ENCODE measurements at regions of chr5 and their contacts with region 1.

Region 1: DNA sequence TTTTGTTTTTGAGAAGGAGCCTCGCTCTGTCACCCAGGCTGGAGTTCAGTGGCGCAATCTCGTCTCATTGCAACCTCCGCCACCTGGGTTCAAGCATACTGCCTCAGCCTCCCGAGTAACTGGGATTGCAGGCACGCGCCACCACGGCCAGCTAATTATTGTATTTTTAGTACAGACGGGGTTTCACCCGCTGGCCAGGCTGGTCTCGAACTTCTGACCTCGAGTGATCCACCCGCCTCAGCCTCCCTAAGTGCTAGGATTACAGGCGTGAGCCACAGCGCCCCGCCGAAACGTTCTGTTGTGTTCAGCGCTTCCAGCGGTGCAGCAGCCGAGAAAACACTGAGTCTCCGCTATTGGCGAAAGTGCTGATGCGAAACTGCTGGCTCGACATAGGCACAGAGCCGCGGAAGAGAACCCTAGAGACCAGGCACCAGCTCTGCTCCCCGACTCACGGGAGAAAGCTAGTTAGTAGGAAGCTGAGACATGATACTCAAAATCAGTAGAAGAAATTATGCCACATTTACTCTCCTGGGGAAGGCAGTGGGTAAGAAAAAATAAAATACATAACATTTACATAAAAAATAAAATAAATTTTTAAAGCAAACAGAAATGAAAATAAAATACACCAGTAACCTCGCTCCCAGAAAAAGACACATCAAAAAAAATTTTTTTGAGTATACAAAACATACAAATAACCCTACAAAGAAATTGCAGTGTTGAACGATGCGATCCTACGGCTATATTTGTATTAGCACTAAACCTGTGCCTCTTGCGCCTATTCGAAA is 31.6 kb downstream of the ANXA2R start:
- DNase-seq: peak; percentile 84 to 95 (median 89)
- H3K4me3 ChIP-seq: peak overlapping the region; percentile 79
- H3K4me3 Mint-ChIP-seq: peak overlapping the region; percentile 85 to 98 (median 93)
- H3K27ac ChIP-seq: peak overlapping the region; percentile 80
- H3K27ac Mint-ChIP-seq: peak overlapping the region; percentile 97 to 100 (median 99)
- H3K4me1 ChIP-seq: peaks cover 26% of the 10 kb centered on the region
- H3K4me1 Mint-ChIP-seq: peaks cover 36 to 40% (median 39%) of the 10 kb centered on the region in 3 donors
- H3K27me3 ChIP-seq: no peaks in the 10 kb centered on the region
- H3K27me3 Mint-ChIP-seq: peaks cover 0 to 6% of the 10 kb centered on the region in 2 donors

Region 2: GRCh38 chr5:42915306-42915866 is 93.2 kb before region 1 on chr5:
- CTCF ChIA-PET with region 1: interaction called, 23 read pairs
- POLR2A ChIA-PET with region 1: interaction called, 10 read pairs
- DNase-seq: no peak
- H3K4me3 ChIP-seq: no peak overlapping the region
- H3K4me3 Mint-ChIP-seq: no peak overlapping the region
- H3K27ac ChIP-seq: no peak overlapping the region
- H3K27ac Mint-ChIP-seq: no peak overlapping the region
- H3K4me1 ChIP-seq: no peaks in the 10 kb centered on the region
- H3K4me1 Mint-ChIP-seq: peaks cover 2 to 5% (median 4%) of the 10 kb centered on the region in 3 donors
- H3K27me3 ChIP-seq: no peaks in the 10 kb centered on the region
- H3K27me3 Mint-ChIP-seq: no peaks in the 10 kb centered on the region

Region 3: GRCh38 chr5:42984307-42984706 is 24.3 kb before region 1 on chr5:
- CTCF ChIA-PET with region 1: no interaction called
- POLR2A ChIA-PET with region 1: no interaction called
- DNase-seq: no peak
- H3K4me3 ChIP-seq: no peak overlapping the region
- H3K4me3 Mint-ChIP-seq: no peak overlapping the region
- H3K27ac ChIP-seq: no peak overlapping the region
- H3K27ac Mint-ChIP-seq: no peak overlapping the region
- H3K4me1 ChIP-seq: peaks cover 47% of the 10 kb centered on the region
- H3K4me1 Mint-ChIP-seq: peaks cover 51 to 66% (median 54%) of the 10 kb centered on the region in 3 donors
- H3K27me3 ChIP-seq: no peaks in the 10 kb centered on the region
- H3K27me3 Mint-ChIP-seq: no peaks in the 10 kb centered on the region

Region 4: GRCh38 chr5:42994246-42995151 is 14.1 kb before region 1 on chr5:
- CTCF ChIA-PET with region 1: interaction called, 168 read pairs
- POLR2A ChIA-PET with region 1: interaction called, 285 read pairs
- DNase-seq: peak; percentile 74 to 91 (median 84)
- H3K4me3 ChIP-seq: peak overlapping the region; percentile 97
- H3K4me3 Mint-ChIP-seq: peak overlapping the region; percentile 94 to 100 (median 99)
- H3K27ac ChIP-seq: peak overlapping the region; percentile 97
- H3K27ac Mint-ChIP-seq: peak overlapping the region; percentile 97 to 100 (median 100)
- H3K4me1 ChIP-seq: peaks cover 29% of the 10 kb centered on the region
- H3K4me1 Mint-ChIP-seq: peaks cover 31 to 35% (median 35%) of the 10 kb centered on the region in 3 donors
- H3K27me3 ChIP-seq: no peaks in the 10 kb centered on the region
- H3K27me3 Mint-ChIP-seq: peaks cover 0 to 13% of the 10 kb centered on the region in 2 donors

Region 5: DNA sequence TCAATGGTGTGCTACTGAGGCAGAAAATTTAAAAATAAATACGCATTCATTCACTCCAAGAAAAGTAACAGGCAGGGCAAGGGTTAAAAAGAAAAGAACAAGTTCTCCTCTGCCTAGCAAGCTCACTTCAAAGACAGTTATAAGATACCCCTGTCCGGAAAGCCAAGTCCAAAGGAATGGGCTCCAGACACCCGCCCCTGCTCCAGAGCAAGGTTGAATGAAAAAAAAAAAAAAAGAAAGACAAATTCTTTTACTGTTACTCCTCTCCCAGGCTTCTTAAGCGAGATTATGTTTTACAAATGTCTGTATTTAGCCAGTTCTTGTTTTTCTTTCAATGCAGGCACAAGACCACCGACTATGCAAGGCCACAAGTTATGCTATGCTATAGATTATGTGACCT is 40.7 kb after region 1 on chr5:
- CTCF ChIA-PET with region 1: interaction called, 3 read pairs
- POLR2A ChIA-PET with region 1: interaction called, 10 read pairs
- DNase-seq: no peak
- H3K4me3 ChIP-seq: no peak overlapping the region
- H3K4me3 Mint-ChIP-seq: no peak overlapping the region
- H3K27ac ChIP-seq: no peak overlapping the region
- H3K27ac Mint-ChIP-seq: peak overlapping the region in 1 of 8 donors; percentile 48
- H3K4me1 ChIP-seq: peaks cover 5% of the 10 kb centered on the region
- H3K4me1 Mint-ChIP-seq: peaks cover 16 to 32% (median 31%) of the 10 kb centered on the region in 3 donors
- H3K27me3 ChIP-seq: no peaks in the 10 kb centered on the region
- H3K27me3 Mint-ChIP-seq: no peaks in the 10 kb centered on the region

Region 6: GRCh38 chr5:43120720-43121564 is 112.4 kb after region 1 on chr5 and contains the start of gene ZNF131:
- CTCF ChIA-PET with region 1: interaction called, 7 read pairs
- POLR2A ChIA-PET with region 1: interaction called, 14 read pairs
- DNase-seq: peak; percentile 94 to 99 (median 96)
- H3K4me3 ChIP-seq: peak within 1 kb of the TSS; percentile 89
- H3K4me3 Mint-ChIP-seq: peak within 1 kb of the TSS; percentile 90 to 99 (median 93)
- H3K27ac ChIP-seq: peak within 1 kb of the TSS; percentile 97
- H3K27ac Mint-ChIP-seq: peak within 1 kb of the TSS; percentile 84 to 99 (median 96)
- H3K4me1 ChIP-seq: peaks cover 45% of the 10 kb centered on the region
- H3K4me1 Mint-ChIP-seq: peaks cover 33 to 43% (median 40%) of the 10 kb centered on the region in 3 donors
- H3K27me3 ChIP-seq: no peaks in the 10 kb centered on the region
- H3K27me3 Mint-ChIP-seq: no peaks in the 10 kb centered on the region
- total RNA-seq, gene ZNF131: 39.2 to 39.5 TPM

Region 7: DNA sequence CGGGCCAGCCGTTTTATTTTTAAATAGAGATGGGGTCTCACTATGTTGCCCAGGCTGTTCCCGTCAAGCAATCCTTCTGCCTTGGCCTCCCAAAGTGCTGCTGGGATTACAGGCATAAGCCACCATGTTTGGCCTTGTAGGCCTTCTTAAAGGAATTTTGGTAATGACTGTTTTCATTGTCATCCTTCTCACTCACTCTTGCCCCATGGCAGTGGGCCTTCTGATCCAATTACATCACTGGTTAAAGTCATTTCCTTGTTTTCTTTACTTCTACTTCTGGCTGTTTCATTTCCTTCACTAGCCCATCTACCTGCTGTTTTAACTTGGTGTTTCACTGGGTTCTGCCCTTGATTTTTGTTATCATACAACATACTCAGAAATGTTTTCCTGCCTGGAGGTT is 163.4 kb after region 1 on chr5:
- CTCF ChIA-PET with region 1: no interaction called
- POLR2A ChIA-PET with region 1: no interaction called
- DNase-seq: no peak
- H3K4me3 ChIP-seq: no peak overlapping the region
- H3K4me3 Mint-ChIP-seq: no peak overlapping the region
- H3K27ac ChIP-seq: no peak overlapping the region
- H3K27ac Mint-ChIP-seq: peak overlapping the region in 3 of 8 donors; percentile 71 to 84 (median 78)
- H3K4me1 ChIP-seq: no peaks in the 10 kb centered on the region
- H3K4me1 Mint-ChIP-seq: peaks cover under 1 to 9% (median 3%) of the 10 kb centered on the region in 3 donors
- H3K27me3 ChIP-seq: no peaks in the 10 kb centered on the region
- H3K27me3 Mint-ChIP-seq: no peaks in the 10 kb centered on the region

Region 8: GRCh38 chr5:44312374-44312773 is 1303.8 kb after region 1 on chr5:
- CTCF ChIA-PET with region 1: no interaction called
- POLR2A ChIA-PET with region 1: no interaction called
- DNase-seq: no peak
- H3K4me3 ChIP-seq: no peak overlapping the region
- H3K4me3 Mint-ChIP-seq: no peak overlapping the region
- H3K27ac ChIP-seq: no peak overlapping the region
- H3K27ac Mint-ChIP-seq: no peak overlapping the region
- H3K4me1 ChIP-seq: no peaks in the 10 kb centered on the region
- H3K4me1 Mint-ChIP-seq: no peaks in the 10 kb centered on the region
- H3K27me3 ChIP-seq: no peaks in the 10 kb centered on the region
- H3K27me3 Mint-ChIP-seq: no peaks in the 10 kb centered on the region